Dorsolateral prefrontal cortex (tissue), 120 donors: ENCODE measurements at regions of chr17 and their contacts with region 1.

Region 1: GRCh38 chr17:29069526-29070041 is 26.6 kb downstream of the PIPOX start:
- DNase-seq: peak in 4 of 10 donors; percentile 36 to 66 (median 56)
- H3K4me3 ChIP-seq: peak overlapping the region in 2 of 59 donors; percentile 3 to 15
- H3K27ac ChIP-seq: peak overlapping the region in 6 of 59 donors; percentile 2 to 49 (median 26)
- H3K27me3 ChIP-seq: no peaks in the 10 kb centered on the region
- CTCF ChIP-seq: no peak

Region 2: DNA sequence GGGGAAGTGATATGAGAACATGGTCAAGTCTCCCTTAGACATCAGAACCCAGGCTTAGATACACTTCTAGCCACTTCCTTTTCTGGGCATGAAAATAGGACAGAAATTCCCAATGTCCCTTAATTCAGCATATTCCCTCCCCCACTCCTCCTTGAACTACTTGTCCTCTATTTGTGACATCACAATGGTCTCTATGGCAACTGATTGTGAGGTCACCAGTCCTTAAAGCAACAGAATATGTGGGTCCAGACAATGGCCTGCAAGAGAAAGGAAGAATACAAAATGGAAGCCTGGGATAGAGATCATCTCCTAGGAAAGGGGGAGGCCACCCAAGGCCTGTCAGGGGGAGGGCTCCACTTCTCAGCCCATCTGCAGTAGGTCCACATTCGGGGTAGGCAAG is 57.0 kb before region 1 on chr17:
- intact Hi-C with region 1: loop called in 1 of 2 experiments (anchors 5 kb)
- DNase-seq: no peak
- H3K4me3 ChIP-seq: no peak overlapping the region
- H3K27ac ChIP-seq: no peak overlapping the region
- H3K27me3 ChIP-seq: no peaks in the 10 kb centered on the region
- CTCF ChIP-seq: no peak

Region 3: DNA sequence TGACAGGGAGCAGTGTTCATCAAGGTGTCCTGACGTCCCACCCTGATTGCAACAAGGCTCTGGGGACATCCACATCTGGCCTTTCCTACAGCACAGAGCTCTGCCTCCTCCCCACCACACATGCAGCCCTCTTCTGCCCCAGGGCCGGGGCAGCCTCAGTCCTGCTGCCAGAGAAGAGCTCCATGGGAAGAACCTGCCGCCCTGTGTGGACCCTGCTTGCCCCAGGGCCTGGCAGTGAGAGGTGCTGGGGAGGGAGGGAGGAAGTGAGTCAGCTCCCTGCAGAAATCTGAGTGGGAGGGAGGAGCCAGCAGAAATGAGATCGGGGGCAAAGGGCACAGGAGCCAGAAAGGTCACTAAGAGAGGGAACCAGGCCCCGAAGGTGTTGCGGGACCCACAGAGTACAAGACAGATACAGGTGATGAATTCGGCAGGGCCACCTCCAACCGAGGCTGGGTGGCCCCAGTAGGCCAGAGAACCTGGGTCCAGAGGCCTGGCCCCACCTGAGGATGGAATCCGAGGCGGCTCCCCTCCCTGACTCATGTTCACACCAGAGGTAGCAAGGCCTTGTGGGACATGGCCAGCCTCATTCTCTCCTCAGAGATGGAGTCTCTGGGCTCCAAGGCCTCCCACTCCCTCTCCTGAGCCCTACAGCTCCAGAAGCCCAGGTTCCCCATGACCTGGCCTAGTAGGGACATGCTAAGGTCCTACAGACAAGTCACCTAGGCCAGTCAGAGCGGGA is 85.8 kb after region 1 on chr17:
- intact Hi-C with region 1: no loop called
- DNase-seq: no peak
- H3K4me3 ChIP-seq: peak overlapping the region in 10 of 59 donors; percentile 2 to 35 (median 21)
- H3K27ac ChIP-seq: peak overlapping the region; percentile 71 to 97 (median 93)
- H3K27me3 ChIP-seq: no peaks in the 10 kb centered on the region
- CTCF ChIP-seq: no peak